Natural killer cell (primary cell): ENCODE measurements at regions of chr9 and their contacts with region 1.

Region 1: GRCh38 chr9:108933718-108934322 is at the start of gene ELP1:
- DNase-seq: peak; percentile 89 to 96
- ATAC-seq: peak; percentile 83 to 90 (median 84)
- H3K4me3 ChIP-seq: peak within 1 kb of the TSS; percentile 89
- H3K4me3 Mint-ChIP-seq: peak within 1 kb of the TSS; percentile 99
- H3K27ac ChIP-seq: peak within 1 kb of the TSS; percentile 86
- H3K27ac Mint-ChIP-seq: peak within 1 kb of the TSS; percentile 95 to 99
- H3K4me1 ChIP-seq: peaks cover 12% of the 10 kb centered on the region
- H3K4me1 Mint-ChIP-seq: peaks cover 22 to 36% of the 10 kb centered on the region in 2 donors
- H3K27me3 ChIP-seq: no peaks in the 10 kb centered on the region
- H3K27me3 Mint-ChIP-seq: no peaks in the 10 kb centered on the region
- CTCF ChIP-seq: no peak
- total RNA-seq, gene ELP1: 21.8 to 33.0 (median 28.2) TPM

Region 2: GRCh38 chr9:109012876-109013678 is 79.3 kb after region 1 on chr9 and contains the start of gene CTNNAL1:
- intact Hi-C with region 1: loop called (anchors 2 kb)
- DNase-seq: peak; percentile 86 to 90
- ATAC-seq: peak; percentile 93 to 99 (median 96)
- H3K4me3 ChIP-seq: peak within 1 kb of the TSS; percentile 51
- H3K4me3 Mint-ChIP-seq: peak within 1 kb of the TSS; percentile 98
- H3K27ac ChIP-seq: peak within 1 kb of the TSS; percentile 50
- H3K27ac Mint-ChIP-seq: peak within 1 kb of the TSS; percentile 84 to 91
- H3K4me1 ChIP-seq: peaks cover 15% of the 10 kb centered on the region
- H3K4me1 Mint-ChIP-seq: peaks cover 24 to 29% of the 10 kb centered on the region in 2 donors
- H3K27me3 ChIP-seq: no peaks in the 10 kb centered on the region
- H3K27me3 Mint-ChIP-seq: peaks cover 0 to 7% of the 10 kb centered on the region in 2 donors
- CTCF ChIP-seq: no peak
- total RNA-seq, gene CTNNAL1: 2.6 to 7.6 (median 2.7) TPM

Region 3: DNA sequence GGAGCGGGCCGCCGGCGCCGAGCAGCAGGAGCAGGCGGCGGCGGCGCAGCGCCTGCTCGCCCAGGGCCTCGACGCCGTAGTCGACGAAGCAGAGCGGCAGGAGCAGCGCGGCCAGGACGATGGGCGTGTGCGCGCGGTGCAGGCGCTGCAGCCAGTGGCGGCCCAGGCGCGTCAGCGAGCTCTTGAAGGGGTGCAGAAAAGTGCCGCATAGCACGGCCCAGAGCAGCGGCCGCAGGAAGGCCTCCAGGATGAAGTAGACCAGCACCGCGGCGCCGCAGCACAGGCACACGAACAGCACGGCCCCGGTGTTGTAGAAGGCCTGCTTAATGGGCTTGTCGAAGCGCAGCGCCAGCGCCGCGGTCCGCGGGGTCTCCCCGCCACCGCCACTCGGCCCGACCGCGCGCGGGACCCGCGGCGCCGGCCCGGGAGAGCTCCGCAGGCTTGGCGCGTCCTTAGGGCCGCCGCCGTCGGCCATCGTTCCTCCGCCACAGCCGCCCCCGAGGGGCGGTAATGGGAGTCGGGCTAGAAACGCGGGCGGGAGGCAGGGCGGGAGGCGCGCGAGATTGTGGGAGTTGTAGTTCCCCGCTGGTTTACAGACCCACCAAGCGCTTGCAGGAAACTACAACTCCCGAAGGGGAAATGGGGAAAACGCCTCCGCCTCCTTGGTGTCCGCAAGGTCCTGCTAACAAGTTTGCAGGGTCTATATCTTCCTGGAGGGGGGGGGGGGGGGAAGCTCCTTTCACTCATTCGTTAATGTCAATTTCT is 185.8 kb after region 1 on chr9 and contains the start of gene TMEM245:
- intact Hi-C with region 1: loop called (anchors 1 kb)
- DNase-seq: peak; percentile 87 to 98
- ATAC-seq: peak; percentile 93 to 99 (median 95)
- H3K4me3 ChIP-seq: peak within 1 kb of the TSS; percentile 77
- H3K4me3 Mint-ChIP-seq: peak within 1 kb of the TSS; percentile 93
- H3K27ac ChIP-seq: peak within 1 kb of the TSS; percentile 54
- H3K27ac Mint-ChIP-seq: peak within 1 kb of the TSS; percentile 63 to 82
- H3K4me1 ChIP-seq: peaks cover 20% of the 10 kb centered on the region
- H3K4me1 Mint-ChIP-seq: peaks cover 36 to 43% of the 10 kb centered on the region in 2 donors
- H3K27me3 ChIP-seq: no peaks in the 10 kb centered on the region
- H3K27me3 Mint-ChIP-seq: peaks cover 0 to 3% of the 10 kb centered on the region in 2 donors
- CTCF ChIP-seq: no peak
- total RNA-seq, gene TMEM245: 14.5 to 22.5 (median 21.8) TPM